ENCODE measurements at regions of chr20 and their contacts with region 1.

Region 1: GRCh38 chr20:2451939-2452732 is 18.5 kb downstream of the SNRPB start:
- DNase-seq: peak; percentile 54
- H3K4me3 ChIP-seq: no peak overlapping the region
- H3K27ac ChIP-seq: no peak overlapping the region
- H3K4me1 ChIP-seq: no peaks in the 10 kb centered on the region
- CTCF ChIP-seq: peak; percentile 87

Region 2: GRCh38 chr20:1945134-1945618 is 507.0 kb before region 1 on chr20:
- CTCF ChIA-PET with region 1: no interaction called
- POLR2A ChIA-PET with region 1: no interaction called
- intact Hi-C with region 1: no loop called
- DNase-seq: no peak
- H3K4me3 ChIP-seq: no peak overlapping the region
- H3K27ac ChIP-seq: no peak overlapping the region
- H3K4me1 ChIP-seq: no peaks in the 10 kb centered on the region
- CTCF ChIP-seq: no peak

Region 3: GRCh38 chr20:1965520-1966351 is 486.4 kb before region 1 on chr20:
- CTCF ChIA-PET with region 1: no interaction called
- POLR2A ChIA-PET with region 1: no interaction called
- intact Hi-C with region 1: loop called (anchors 5 kb)
- DNase-seq: peak; percentile 86
- H3K4me3 ChIP-seq: no peak overlapping the region
- H3K27ac ChIP-seq: no peak overlapping the region
- H3K4me1 ChIP-seq: peaks cover 8% of the 10 kb centered on the region
- CTCF ChIP-seq: peak; percentile 98

Region 4: DNA sequence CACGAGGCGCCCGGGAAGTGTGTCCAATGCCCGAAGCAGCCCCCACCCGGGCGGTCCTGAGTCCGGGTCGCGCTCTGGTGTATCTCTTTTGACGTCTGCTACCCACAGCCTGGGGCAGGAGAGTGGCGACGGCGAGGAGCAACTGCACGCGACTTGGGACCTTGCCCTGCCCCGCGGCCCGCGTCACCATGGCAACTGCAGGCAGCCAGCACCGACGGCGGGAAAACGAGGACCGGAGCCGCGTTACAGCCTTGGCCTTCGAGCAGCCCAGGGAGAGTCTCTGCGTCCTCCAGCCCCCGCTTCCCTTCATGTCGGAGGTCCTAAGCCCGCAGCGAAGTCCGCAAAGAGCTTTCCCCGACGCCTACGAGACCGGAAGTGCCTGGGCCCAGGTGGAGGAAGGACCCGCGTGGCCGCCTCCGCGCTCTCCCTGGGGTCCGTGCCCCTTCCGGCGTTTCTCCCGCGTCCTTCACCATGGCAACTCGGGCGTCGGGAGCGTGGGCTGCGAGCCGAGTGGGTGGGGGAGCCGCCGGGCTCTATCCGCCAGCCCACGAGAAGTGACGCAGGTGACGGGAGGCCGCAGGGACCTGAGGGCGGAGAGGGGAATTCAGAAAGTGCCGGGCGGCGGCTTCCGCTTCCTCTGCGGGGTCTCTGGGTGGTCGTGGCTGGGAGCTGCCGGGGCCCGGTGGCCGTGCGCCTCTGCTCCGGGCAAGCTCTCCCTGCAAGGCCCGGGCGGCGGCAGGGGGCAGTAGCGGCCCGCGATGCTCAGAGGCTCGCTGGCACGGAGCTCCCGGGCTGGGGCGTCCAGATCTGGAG is 245.0 kb before region 1 on chr20:
- CTCF ChIA-PET with region 1: no interaction called
- POLR2A ChIA-PET with region 1: no interaction called
- intact Hi-C with region 1: loop called (anchors 5 kb)
- DNase-seq: no peak
- H3K4me3 ChIP-seq: no peak overlapping the region
- H3K27ac ChIP-seq: no peak overlapping the region
- H3K4me1 ChIP-seq: no peaks in the 10 kb centered on the region
- CTCF ChIP-seq: peak; percentile 42

Region 5: DNA sequence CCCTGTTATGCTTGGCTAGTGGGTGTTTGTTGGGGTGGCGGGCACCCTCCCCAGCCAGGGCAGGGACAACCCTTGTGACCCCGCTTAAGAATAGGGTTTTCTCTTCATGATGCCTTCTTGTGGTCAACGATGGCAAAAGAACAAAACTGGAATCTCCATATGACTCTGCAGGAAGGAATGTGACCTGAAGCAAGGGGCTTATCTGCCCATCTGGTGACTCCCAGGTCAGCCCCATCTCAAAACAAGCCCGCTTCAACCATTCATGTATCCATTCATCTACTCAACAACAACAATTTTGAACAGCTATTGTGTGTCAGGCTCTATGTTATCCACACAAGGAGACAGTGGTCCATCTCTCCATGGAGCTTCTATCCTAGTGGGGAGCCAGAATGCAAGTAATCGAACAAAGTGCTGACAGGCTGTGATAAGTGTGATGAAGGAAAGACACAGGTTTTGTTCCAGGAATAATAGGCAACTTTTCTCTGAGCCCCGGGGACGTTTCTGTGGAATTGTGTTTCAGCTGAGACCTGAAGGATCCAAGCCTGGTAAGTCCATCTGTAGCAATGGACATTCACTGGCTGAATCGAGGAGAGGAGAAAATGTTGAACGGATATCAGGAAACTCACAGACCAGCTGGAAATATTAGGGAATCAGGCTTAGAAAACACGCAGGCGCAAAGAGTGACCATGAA is 102.2 kb before region 1 on chr20:
- CTCF ChIA-PET with region 1: no interaction called
- POLR2A ChIA-PET with region 1: no interaction called
- intact Hi-C with region 1: loop called (anchors 1 kb)
- DNase-seq: no peak
- H3K4me3 ChIP-seq: no peak overlapping the region
- H3K27ac ChIP-seq: no peak overlapping the region
- H3K4me1 ChIP-seq: peaks cover 4% of the 10 kb centered on the region
- CTCF ChIP-seq: no peak

Region 6: GRCh38 chr20:2387180-2387577 is 65.0 kb before region 1 on chr20:
- CTCF ChIA-PET with region 1: no interaction called
- POLR2A ChIA-PET with region 1: no interaction called
- intact Hi-C with region 1: loop called (anchors 1 kb)
- DNase-seq: peak; percentile 66
- H3K4me3 ChIP-seq: peak overlapping the region; percentile 34
- H3K27ac ChIP-seq: no peak overlapping the region
- H3K4me1 ChIP-seq: no peaks in the 10 kb centered on the region
- CTCF ChIP-seq: peak; percentile 85

Measured in OCI-LY7 (cell line).